ENCODE measurements at regions of chr11 and their contacts with region 1.

Region 1: GRCh38 chr11:93614173-93614722 is 47.2 kb upstream of the CEP295 start:
- DNase-seq: peak; percentile 63
- ATAC-seq: peak; percentile 93
- H3K4me3 ChIP-seq: no peak overlapping the region
- H3K27ac ChIP-seq: no peak overlapping the region
- H3K4me1 ChIP-seq: peaks cover 10% of the 10 kb centered on the region
- H3K27me3 ChIP-seq: 0 out of 5 replicates have a peak, but pooled peaks cover 0 to 1% of the 10 kb centered on the region in 2 experiments
- CTCF ChIP-seq: peak; percentile 49
- EP300 ChIP-seq: no peak
- POLR2A ChIP-seq: no peak
- RAD21 ChIP-seq: no peak

Region 2: DNA sequence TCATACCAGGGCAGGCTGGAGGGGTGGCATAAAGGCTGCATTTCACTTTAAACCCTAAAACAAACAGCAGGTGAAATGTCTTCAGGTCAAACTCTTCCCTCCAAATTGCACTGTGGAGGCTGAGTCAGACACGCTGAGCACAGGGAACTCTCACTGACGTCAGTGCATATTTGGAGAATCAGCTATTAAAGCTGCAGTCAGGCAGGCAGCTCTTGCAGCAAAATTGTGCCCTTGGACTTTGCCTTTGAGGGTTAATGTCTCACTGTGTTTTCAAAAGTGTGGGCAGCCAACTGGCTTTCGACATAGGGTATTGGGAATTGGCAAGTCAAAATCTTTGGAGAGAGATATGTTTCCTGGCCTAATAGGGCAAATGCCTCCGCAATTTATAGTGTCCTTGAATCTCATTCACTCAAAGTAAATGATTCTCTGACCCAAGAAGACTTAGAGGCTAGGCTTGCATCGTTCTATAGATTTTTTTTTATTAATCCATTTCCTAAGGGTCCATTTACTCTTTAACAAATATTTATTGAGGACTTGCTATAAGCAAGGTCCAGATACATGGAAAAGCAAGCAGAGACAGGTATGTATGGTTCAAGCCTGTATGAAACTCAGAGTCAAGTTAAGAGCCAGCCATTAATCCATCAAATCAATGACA is 43.4 kb before region 1 on chr11:
- CTCF ChIA-PET with region 1: no interaction called
- POLR2A ChIA-PET with region 1: no interaction called
- in situ Hi-C with region 1: no loop called
- intact Hi-C with region 1: loop called (anchors 5 kb)
- DNase-seq: peak; percentile 90
- ATAC-seq: peak; percentile 97
- H3K4me3 ChIP-seq: peak overlapping the region in 1 of 3 experiments; percentile 12; a peak in 1 of 6 replicates
- H3K27ac ChIP-seq: peak overlapping the region; percentile 55
- H3K4me1 ChIP-seq: peaks cover 53% of the 10 kb centered on the region
- H3K27me3 ChIP-seq: no peaks in the 10 kb centered on the region
- CTCF ChIP-seq: no peak
- EP300 ChIP-seq: peak; percentile 74 to 79
- POLR2A ChIP-seq: no peak
- RAD21 ChIP-seq: no peak

Region 3: DNA sequence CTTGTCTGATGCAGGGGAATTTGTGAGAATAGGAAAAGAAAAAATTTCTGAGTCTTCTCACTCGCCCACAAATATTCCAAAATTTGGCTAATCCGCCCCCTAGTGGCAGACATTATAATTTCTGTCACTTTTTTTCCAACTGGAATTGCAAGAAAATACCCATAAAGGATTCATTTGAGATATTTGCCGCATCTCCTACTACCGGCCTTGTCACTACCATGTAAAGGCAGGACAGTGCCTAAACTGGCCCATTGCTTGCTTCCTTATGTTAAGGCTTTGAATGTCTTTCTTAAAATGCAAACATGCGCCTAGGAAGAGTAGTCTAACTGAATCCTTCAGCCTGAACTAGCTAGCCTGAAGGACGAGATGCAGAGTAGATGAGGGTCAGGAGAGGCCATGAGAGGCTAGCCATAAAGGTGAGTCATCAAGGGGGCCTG is 37.9 kb after region 1 on chr11:
- CTCF ChIA-PET with region 1: no interaction called
- POLR2A ChIA-PET with region 1: no interaction called
- in situ Hi-C with region 1: no loop called
- intact Hi-C with region 1: no loop called
- DNase-seq: peak; percentile 17
- ATAC-seq: peak; percentile 40
- H3K4me3 ChIP-seq: no peak overlapping the region
- H3K27ac ChIP-seq: no peak overlapping the region
- H3K4me1 ChIP-seq: no peaks in the 10 kb centered on the region
- H3K27me3 ChIP-seq: peaks cover 0 to 3% of the 10 kb centered on the region in 2 experiments; a peak in 1 of 5 replicates
- CTCF ChIP-seq: peak; percentile 64
- EP300 ChIP-seq: no peak
- POLR2A ChIP-seq: no peak
- RAD21 ChIP-seq: no peak

Region 4: GRCh38 chr11:93668171-93668570 is 53.9 kb after region 1 on chr11:
- CTCF ChIA-PET with region 1: no interaction called
- POLR2A ChIA-PET with region 1: no interaction called
- in situ Hi-C with region 1: no loop called
- intact Hi-C with region 1: no loop called
- DNase-seq: no peak
- ATAC-seq: no peak
- H3K4me3 ChIP-seq: no peak overlapping the region
- H3K27ac ChIP-seq: no peak overlapping the region
- H3K4me1 ChIP-seq: peaks cover 11% of the 10 kb centered on the region
- H3K27me3 ChIP-seq: no peaks in the 10 kb centered on the region; a peak in 1 of 5 replicates
- CTCF ChIP-seq: no peak
- EP300 ChIP-seq: no peak
- POLR2A ChIP-seq: no peak
- RAD21 ChIP-seq: no peak

Region 5: DNA sequence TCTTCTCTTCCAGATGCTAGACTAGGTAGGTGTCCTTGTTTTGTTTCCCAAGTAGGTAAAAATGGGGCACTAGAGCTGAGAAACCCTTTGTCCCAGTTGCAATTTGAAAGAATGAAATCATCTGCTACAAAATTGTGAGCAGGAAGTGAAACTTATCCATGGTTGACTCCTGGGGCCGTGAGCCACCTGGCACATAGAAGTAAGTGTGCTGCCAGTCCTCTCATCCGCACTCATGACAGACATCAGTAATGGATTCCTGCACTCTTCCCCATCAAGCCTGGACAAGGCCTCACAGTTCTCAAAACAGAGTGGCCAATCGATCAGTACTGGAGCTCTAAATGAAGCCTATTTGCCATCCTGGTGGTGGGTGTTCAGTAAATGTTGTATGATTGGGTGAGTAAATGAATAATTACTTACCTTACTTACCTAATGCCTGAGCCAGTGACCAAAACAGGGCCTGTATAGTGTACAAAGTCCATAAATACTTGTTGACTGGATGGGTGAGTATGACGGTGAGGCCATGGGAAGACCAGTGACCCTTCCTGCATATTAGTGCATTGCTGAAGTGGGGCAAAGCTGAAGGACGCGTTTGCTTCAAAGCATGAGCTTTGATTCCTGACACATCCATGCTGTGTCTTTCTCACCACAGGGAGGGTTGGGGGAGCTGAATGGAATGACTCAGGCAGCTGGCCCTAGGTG is 338.0 kb after region 1 on chr11:
- CTCF ChIA-PET with region 1: no interaction called
- POLR2A ChIA-PET with region 1: no interaction called
- in situ Hi-C with region 1: no loop called
- intact Hi-C with region 1: no loop called
- DNase-seq: peak; percentile 64
- ATAC-seq: peak; percentile 94
- H3K4me3 ChIP-seq: no peak overlapping the region
- H3K27ac ChIP-seq: peak overlapping the region; percentile 59
- H3K4me1 ChIP-seq: peaks cover 17% of the 10 kb centered on the region
- H3K27me3 ChIP-seq: no peaks in the 10 kb centered on the region
- CTCF ChIP-seq: no peak
- EP300 ChIP-seq: peak in 1 of 2 experiments; percentile 18; a peak in 1 of 4 replicates
- POLR2A ChIP-seq: no peak
- RAD21 ChIP-seq: no peak

Measured in HepG2 (cell line).